Caco-2 (cell line): ENCODE measurements at regions of chr20 and their contacts with region 1.

Region 1: GRCh38 chr20:14142171-14142570 is 146.9 kb downstream of the MACROD2 start:
- DNase-seq: peak; percentile 84 to 87
- H3K4me3 ChIP-seq: no peak overlapping the region
- H3K4me3 Mint-ChIP-seq: peak overlapping the region; percentile 23
- H3K27ac Mint-ChIP-seq: no peak overlapping the region
- H3K4me1 ChIP-seq: peaks cover 28% of the 10 kb centered on the region
- H3K4me1 Mint-ChIP-seq: no peaks in the 10 kb centered on the region
- H3K27me3 ChIP-seq: no peaks in the 10 kb centered on the region
- H3K27me3 Mint-ChIP-seq: no peaks in the 10 kb centered on the region
- CTCF ChIP-seq: peak; percentile 77 to 82

Region 2: DNA sequence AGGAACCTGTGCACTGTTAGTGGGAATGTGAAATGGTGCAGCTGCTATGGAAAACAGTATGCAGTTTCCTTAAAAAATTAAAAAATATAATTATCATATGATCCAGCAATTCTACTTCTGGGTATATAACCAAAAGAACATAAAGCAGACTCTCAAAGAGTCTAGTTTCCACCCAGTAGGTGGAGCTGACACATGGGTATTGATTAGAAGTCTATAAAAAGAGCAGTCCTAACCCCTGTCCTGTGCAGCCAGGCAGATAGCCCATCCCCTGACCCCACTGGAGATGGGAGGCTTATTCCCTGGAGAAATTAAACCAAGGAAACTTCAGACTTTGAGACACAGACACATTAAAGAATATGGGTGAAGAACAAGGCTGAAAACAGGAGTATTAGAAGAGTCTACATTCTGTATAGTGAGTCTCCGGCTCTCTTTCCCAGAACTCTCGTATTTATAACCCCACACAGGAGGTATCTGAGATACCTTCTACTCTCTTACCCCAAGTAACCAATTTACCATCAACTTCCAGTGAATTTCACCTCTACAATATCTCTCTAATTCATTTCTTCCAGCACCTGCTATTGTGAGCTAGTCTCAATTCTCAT is 244.1 kb before region 1 on chr20:
- CTCF ChIA-PET with region 1: no interaction called
- POLR2A ChIA-PET with region 1: no interaction called
- intact Hi-C with region 1: no loop called
- DNase-seq: peak in 1 of 2 experiments; percentile 15
- H3K4me3 ChIP-seq: no peak overlapping the region
- H3K4me3 Mint-ChIP-seq: no peak overlapping the region
- H3K27ac Mint-ChIP-seq: no peak overlapping the region
- H3K4me1 ChIP-seq: no peaks in the 10 kb centered on the region
- H3K4me1 Mint-ChIP-seq: no peaks in the 10 kb centered on the region
- H3K27me3 ChIP-seq: no peaks in the 10 kb centered on the region
- H3K27me3 Mint-ChIP-seq: peaks cover 15% of the 10 kb centered on the region
- CTCF ChIP-seq: peak; percentile 43

Region 3: DNA sequence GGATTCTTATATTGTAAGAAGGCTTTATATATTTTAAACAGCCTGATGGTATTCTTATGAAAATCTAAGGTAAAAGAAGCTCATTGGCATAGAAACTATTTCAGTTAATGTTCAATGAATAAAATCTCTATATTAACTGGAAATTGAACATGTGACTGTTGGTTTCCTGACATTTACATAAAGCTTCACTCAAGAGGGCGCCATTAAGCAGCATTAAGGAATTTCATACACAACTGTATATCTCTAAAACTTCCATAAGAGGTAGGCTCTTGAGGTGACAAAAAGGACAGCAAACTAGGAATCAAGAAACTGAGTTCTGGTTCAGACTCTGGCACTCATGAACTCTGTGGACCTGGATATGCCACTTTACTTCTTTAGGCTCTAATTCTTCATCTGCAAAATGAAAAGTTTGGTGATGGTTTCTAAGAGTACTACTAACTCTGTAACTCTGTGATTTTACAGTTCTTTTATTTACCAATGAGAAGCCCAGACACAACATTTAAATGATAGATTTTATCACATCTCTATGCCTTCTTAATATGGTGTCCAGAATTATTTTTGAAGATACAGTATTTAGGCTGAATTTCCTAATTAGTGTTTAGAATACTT is 47.7 kb after region 1 on chr20:
- CTCF ChIA-PET with region 1: interaction called, 20 read pairs
- POLR2A ChIA-PET with region 1: no interaction called
- intact Hi-C with region 1: loop called (anchors 1 kb)
- DNase-seq: peak in 1 of 2 experiments; percentile 49
- H3K4me3 ChIP-seq: no peak overlapping the region
- H3K4me3 Mint-ChIP-seq: no peak overlapping the region
- H3K27ac Mint-ChIP-seq: no peak overlapping the region
- H3K4me1 ChIP-seq: peaks cover 4% of the 10 kb centered on the region; the same call in 1 of the 2 replicates
- H3K4me1 Mint-ChIP-seq: peaks cover 16% of the 10 kb centered on the region
- H3K27me3 ChIP-seq: no peaks in the 10 kb centered on the region
- H3K27me3 Mint-ChIP-seq: no peaks in the 10 kb centered on the region
- CTCF ChIP-seq: peak; percentile 27 to 50

Region 4: DNA sequence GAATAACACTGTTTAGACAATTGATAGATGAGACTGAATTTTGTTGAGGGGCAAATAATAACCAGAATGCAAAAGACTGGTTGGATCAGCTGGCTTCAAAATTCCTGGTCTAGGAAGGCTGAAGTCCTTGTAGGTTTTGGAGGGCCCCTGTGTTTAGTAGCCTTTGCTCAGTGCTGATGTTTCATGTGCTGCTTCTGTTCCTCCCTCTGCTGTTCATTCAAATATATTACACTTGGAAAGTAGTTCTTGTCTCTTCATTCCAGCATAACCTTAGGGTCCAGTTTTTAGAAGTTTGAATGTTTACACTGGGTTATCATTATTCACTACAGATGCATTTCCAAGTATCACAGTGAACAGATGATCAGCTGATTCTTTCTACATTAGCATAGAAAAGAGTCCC is 122.7 kb after region 1 on chr20:
- CTCF ChIA-PET with region 1: interaction called, 10 read pairs
- POLR2A ChIA-PET with region 1: no interaction called
- intact Hi-C with region 1: loop called (anchors 1 kb)
- DNase-seq: peak in 1 of 2 experiments; percentile 35
- H3K4me3 ChIP-seq: no peak overlapping the region
- H3K4me3 Mint-ChIP-seq: no peak overlapping the region
- H3K27ac Mint-ChIP-seq: no peak overlapping the region
- H3K4me1 ChIP-seq: peaks cover 8% of the 10 kb centered on the region; the same call in 1 of the 2 replicates
- H3K4me1 Mint-ChIP-seq: peaks cover 8% of the 10 kb centered on the region
- H3K27me3 ChIP-seq: no peaks in the 10 kb centered on the region
- H3K27me3 Mint-ChIP-seq: peaks cover 4% of the 10 kb centered on the region
- CTCF ChIP-seq: peak; percentile 49 to 62

Region 5: GRCh38 chr20:14609328-14610221 is 467.4 kb after region 1 on chr20:
- CTCF ChIA-PET with region 1: no interaction called
- POLR2A ChIA-PET with region 1: no interaction called
- intact Hi-C with region 1: loop called (anchors 5 kb)
- DNase-seq: peak in 1 of 2 experiments; percentile 58
- H3K4me3 ChIP-seq: no peak overlapping the region
- H3K4me3 Mint-ChIP-seq: no peak overlapping the region
- H3K27ac Mint-ChIP-seq: peak overlapping the region; percentile 14
- H3K4me1 ChIP-seq: peaks cover 37% of the 10 kb centered on the region
- H3K4me1 Mint-ChIP-seq: peaks cover 15% of the 10 kb centered on the region
- H3K27me3 ChIP-seq: no peaks in the 10 kb centered on the region
- H3K27me3 Mint-ChIP-seq: no peaks in the 10 kb centered on the region
- CTCF ChIP-seq: no peak

Region 6: GRCh38 chr20:14712302-14712739 is 570.1 kb after region 1 on chr20:
- CTCF ChIA-PET with region 1: no interaction called
- POLR2A ChIA-PET with region 1: no interaction called
- intact Hi-C with region 1: loop called (anchors 5 kb)
- DNase-seq: peak; percentile 57 to 65
- H3K4me3 ChIP-seq: no peak overlapping the region
- H3K4me3 Mint-ChIP-seq: no peak overlapping the region
- H3K27ac Mint-ChIP-seq: peak overlapping the region; percentile 45
- H3K4me1 ChIP-seq: peaks cover 57% of the 10 kb centered on the region
- H3K4me1 Mint-ChIP-seq: peaks cover 45% of the 10 kb centered on the region
- H3K27me3 ChIP-seq: no peaks in the 10 kb centered on the region
- H3K27me3 Mint-ChIP-seq: no peaks in the 10 kb centered on the region
- CTCF ChIP-seq: no peak

Region 7: DNA sequence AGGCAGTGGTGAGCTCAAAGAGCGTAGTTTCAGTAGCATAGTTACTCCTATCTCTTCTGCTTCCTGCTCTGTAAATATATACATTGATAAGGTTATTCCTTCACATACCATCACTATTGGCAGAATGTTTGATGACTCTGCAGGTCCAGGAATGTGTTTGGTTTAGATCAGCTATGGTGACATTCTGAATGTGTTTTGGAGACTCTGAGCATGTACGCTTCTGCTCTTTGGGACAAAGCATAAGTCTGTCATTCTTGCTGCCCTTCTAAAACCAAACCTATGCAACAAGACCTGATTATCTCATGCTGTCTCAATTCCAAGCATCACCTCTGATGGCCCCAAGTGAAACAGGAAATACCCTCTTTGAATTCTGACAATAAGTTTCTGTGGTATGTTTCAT is 1356.8 kb after region 1 on chr20:
- CTCF ChIA-PET with region 1: no interaction called
- POLR2A ChIA-PET with region 1: no interaction called
- intact Hi-C with region 1: loop called (anchors 2 kb)
- DNase-seq: peak; percentile 76 to 81
- H3K4me3 ChIP-seq: no peak overlapping the region
- H3K4me3 Mint-ChIP-seq: peak overlapping the region; percentile 51
- H3K27ac Mint-ChIP-seq: peak overlapping the region; percentile 58
- H3K4me1 ChIP-seq: peaks cover 59% of the 10 kb centered on the region
- H3K4me1 Mint-ChIP-seq: peaks cover 55% of the 10 kb centered on the region
- H3K27me3 ChIP-seq: no peaks in the 10 kb centered on the region
- H3K27me3 Mint-ChIP-seq: no peaks in the 10 kb centered on the region
- CTCF ChIP-seq: no peak

Region 8: GRCh38 chr20:15902493-15902892 is 1760.3 kb after region 1 on chr20:
- CTCF ChIA-PET with region 1: no interaction called
- POLR2A ChIA-PET with region 1: no interaction called
- intact Hi-C with region 1: loop called (anchors 2 kb)
- DNase-seq: peak; percentile 34 to 46
- H3K4me3 ChIP-seq: no peak overlapping the region
- H3K4me3 Mint-ChIP-seq: no peak overlapping the region
- H3K27ac Mint-ChIP-seq: no peak overlapping the region
- H3K4me1 ChIP-seq: no peaks in the 10 kb centered on the region
- H3K4me1 Mint-ChIP-seq: no peaks in the 10 kb centered on the region
- H3K27me3 ChIP-seq: no peaks in the 10 kb centered on the region
- H3K27me3 Mint-ChIP-seq: no peaks in the 10 kb centered on the region
- CTCF ChIP-seq: peak; percentile 31 to 43